MCF 10A (cell line): ENCODE measurements at regions of chr1 and their contacts with region 1.

Region 1: DNA sequence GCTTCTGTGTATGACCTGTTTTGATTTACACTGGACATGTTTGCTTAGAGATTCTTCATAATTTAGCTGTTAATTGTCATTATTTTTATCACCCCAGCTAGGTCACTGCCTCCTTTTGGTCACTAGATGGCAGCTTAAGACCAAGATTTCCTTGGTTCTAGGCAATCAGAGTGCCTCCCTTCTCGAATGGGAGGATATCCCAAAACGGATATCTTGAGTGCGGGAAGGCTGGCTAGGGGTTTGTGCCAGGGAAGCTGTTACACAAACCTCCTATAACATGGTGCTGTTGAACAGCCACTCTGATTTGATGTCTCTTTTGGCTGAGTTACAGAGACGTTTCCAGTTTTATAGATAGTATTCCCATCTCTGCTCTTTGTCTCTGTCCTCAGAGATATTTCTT is 283.5 kb downstream of the S1PR1 start:
- DNase-seq: peak; percentile 65
- H3K4me3 Mint-ChIP-seq: no peak overlapping the region
- H3K27ac Mint-ChIP-seq: no peak overlapping the region
- H3K4me1 Mint-ChIP-seq: no peaks in the 10 kb centered on the region
- H3K27me3 Mint-ChIP-seq: peaks cover 48% of the 10 kb centered on the region
- CTCF ChIP-seq: peak; percentile 84

Region 2: DNA sequence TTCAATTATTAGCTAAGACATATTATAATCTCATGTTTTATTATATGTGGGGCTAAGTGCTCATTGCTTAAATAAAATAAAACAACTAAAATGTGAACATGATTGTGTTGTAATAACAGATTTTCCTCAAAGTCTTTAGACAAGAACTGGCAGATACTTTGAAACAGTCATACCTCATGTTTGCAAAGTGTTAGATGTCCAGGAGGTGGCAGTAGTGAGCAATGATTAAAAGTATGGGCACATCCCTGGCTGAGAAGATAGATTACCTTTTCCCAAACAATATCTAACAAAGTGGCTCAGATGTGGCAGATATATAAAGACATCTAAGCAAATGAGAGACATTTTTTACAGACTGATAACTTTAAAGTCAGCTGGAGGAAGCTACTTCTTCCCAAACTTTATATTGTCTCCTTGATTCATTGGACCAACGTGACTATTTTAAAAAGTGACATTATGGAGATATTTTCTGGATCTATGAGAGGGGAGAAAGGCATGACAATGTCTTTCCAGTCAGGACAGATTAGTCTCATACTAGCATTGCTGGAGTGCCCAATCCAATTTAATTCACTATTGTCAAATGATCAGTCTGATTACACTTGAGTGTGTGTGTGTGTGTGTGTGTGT is 13.6 kb before region 1 on chr1:
- CTCF ChIA-PET with region 1: interaction called, 29 read pairs
- POLR2A ChIA-PET with region 1: no interaction called
- intact Hi-C with region 1: no loop called
- DNase-seq: peak; percentile 76
- H3K4me3 Mint-ChIP-seq: no peak overlapping the region
- H3K27ac Mint-ChIP-seq: no peak overlapping the region
- H3K4me1 Mint-ChIP-seq: no peaks in the 10 kb centered on the region
- H3K27me3 Mint-ChIP-seq: peaks cover 11% of the 10 kb centered on the region
- CTCF ChIP-seq: peak; percentile 67

Region 3: DNA sequence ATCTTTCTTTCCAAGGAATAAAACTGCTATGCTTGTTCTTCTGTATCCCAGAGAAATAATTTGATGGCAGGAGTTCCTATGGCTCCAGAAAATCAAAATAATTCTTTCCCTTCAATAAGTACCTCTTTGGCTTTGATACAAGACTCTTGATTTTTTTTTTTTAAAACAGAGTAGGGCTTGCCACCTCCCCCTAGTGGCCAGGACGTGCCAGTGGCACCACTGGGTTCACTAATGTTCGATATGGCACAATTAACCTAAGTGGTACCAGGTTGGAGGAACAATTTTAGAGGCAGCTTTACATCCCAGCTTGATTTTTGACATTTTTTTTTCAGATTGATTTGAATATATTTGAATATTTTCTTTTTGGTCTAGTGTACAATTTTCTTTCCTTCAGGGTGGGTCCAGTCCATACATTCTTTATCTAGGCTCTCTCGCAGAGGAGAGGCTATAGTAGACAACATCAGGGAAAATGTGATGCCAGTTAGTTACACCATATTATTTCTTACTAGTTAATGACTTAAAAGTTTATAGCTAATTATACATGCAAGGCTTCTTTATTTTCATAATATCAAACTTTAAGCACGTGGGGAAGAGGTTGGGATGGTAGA is 47.4 kb after region 1 on chr1:
- CTCF ChIA-PET with region 1: interaction called, 25 read pairs
- POLR2A ChIA-PET with region 1: no interaction called
- intact Hi-C with region 1: loop called (anchors 1 kb)
- DNase-seq: peak; percentile 47
- H3K4me3 Mint-ChIP-seq: no peak overlapping the region
- H3K27ac Mint-ChIP-seq: no peak overlapping the region
- H3K4me1 Mint-ChIP-seq: no peaks in the 10 kb centered on the region
- H3K27me3 Mint-ChIP-seq: peaks cover 39% of the 10 kb centered on the region
- CTCF ChIP-seq: peak; percentile 91

Region 4: GRCh38 chr1:101971304-101971703 is 451.0 kb after region 1 on chr1:
- CTCF ChIA-PET with region 1: interaction called, 8 read pairs
- POLR2A ChIA-PET with region 1: no interaction called
- intact Hi-C with region 1: loop called (anchors 1 kb)
- DNase-seq: peak; percentile 16
- H3K4me3 Mint-ChIP-seq: no peak overlapping the region
- H3K27ac Mint-ChIP-seq: no peak overlapping the region
- H3K4me1 Mint-ChIP-seq: no peaks in the 10 kb centered on the region
- H3K27me3 Mint-ChIP-seq: peaks cover 87% of the 10 kb centered on the region
- CTCF ChIP-seq: peak; percentile 20

Region 5: DNA sequence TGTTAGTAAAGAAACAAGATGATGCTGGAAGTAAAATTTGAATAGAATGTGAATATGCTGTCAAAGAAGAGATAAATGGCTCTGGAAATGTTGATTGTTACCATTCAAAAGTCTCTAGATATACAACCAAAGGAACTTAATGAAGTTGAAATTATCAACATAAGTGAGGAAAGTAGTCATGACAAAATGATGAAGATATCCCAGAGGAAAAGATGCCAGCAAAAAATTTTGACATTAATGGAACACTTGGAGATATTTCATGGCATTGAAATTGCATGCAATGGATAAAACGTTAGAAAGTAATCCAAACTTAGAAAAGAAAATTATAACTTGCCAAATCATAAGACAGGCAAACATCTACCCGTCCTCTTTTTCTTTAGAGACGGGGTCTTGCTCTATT is 630.9 kb after region 1 on chr1:
- CTCF ChIA-PET with region 1: no interaction called
- POLR2A ChIA-PET with region 1: no interaction called
- intact Hi-C with region 1: no loop called
- DNase-seq: no peak
- H3K4me3 Mint-ChIP-seq: no peak overlapping the region
- H3K27ac Mint-ChIP-seq: no peak overlapping the region
- H3K4me1 Mint-ChIP-seq: no peaks in the 10 kb centered on the region
- H3K27me3 Mint-ChIP-seq: peaks cover 43% of the 10 kb centered on the region
- CTCF ChIP-seq: no peak

Region 6: DNA sequence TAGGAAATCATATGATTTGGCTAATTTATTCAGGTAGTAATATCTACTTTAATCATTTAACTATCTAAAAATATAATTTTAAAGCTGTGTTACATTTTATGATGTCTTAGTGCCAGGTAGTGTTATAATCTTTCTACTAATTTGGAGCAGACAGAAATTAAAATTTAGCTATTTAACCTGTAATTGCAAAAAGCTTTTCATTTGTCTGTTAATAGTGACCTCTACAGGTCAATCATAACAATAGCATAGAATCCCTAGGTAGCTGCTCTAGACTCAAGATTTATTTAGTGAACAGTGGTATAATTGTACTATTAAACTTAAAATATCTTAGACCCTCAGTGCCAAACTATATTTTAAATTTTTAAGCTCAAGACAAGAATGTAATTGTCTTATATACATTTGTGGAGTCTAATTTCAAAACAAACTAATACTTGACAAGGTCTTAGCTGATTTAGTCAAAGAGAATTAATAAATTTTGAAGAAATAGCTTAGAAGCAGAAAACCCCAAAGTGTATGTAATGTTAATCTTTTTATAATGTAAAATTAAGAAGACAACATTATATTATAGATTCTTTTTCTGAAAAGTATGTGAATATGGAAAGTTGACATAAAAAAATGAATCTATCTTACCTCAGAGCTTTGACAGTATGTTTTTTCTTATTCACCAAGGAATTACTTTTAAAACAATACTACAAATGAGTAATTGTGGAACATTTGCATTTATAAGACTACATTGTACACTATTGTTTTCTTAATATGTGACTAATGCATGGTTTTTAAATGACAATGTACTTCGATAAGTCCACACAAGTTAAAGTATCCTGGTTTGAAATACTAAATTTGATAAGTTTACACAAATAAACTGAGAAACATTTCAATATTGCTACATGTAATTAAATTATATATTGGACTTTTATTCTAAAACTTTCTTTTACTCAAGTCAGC is 1941.1 kb after region 1 on chr1:
- CTCF ChIA-PET with region 1: interaction called, 4 read pairs
- POLR2A ChIA-PET with region 1: no interaction called
- intact Hi-C with region 1: loop called (anchors 10 kb)
- DNase-seq: peak; percentile 26
- H3K4me3 Mint-ChIP-seq: no peak overlapping the region
- H3K27ac Mint-ChIP-seq: no peak overlapping the region
- H3K4me1 Mint-ChIP-seq: no peaks in the 10 kb centered on the region
- H3K27me3 Mint-ChIP-seq: peaks cover 13% of the 10 kb centered on the region
- CTCF ChIP-seq: peak; percentile 59